ENCODE measurements at regions of chr21 and their contacts with region 1.

Region 1: DNA sequence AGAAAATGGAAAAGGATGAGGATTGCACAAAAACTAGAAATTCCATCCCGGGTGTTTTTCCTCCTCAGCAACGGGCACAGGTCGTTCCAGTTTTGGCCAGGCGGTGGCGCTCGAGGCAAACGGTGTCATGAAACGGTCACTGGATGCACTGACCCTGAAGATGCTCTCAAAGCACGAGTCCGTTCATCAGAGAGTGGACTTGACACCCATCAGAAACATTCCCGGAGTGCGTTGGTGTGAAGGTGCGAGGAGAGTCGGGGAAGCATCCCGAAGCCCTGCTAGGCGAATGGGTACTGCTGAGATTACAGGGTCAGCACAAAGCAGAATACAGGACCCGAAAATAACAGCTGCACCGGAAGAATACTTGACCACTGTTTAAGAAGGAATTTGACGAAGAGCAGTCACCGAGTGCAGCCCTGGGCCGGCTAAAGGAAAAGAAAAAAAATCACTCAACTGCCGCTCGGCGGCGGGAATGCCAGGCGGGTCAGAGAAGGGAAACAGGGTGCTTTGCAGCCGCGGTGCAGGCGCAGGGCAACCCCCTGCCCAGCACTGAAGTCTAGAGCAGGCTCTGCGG is 71.7 kb upstream of the ETS2 start:
- DNase-seq: peak in 33 of 35 experiments; percentile 20 to 76 (median 59)
- ATAC-seq: peak; percentile 55 to 66 (median 62)
- H3K4me3 ChIP-seq: peak overlapping the region; percentile 43 to 87
- H3K4me3 Mint-ChIP-seq: peak overlapping the region; percentile 73 to 86 (median 79)
- H3K27ac ChIP-seq: no peak overlapping the region
- H3K27ac Mint-ChIP-seq: no peak overlapping the region
- H3K4me1 ChIP-seq: peaks cover 6% of the 10 kb centered on the region in 2 experiments
- H3K4me1 Mint-ChIP-seq: peaks cover 7 to 9% (median 9%) of the 10 kb centered on the region in 3 donors
- H3K27me3 ChIP-seq: peaks cover 0 to 24% of the 10 kb centered on the region in 2 experiments
- H3K27me3 Mint-ChIP-seq: peaks cover 24 to 28% of the 10 kb centered on the region in 2 donors

Region 2: GRCh38 chr21:39379986-39380891 is 646.2 kb after region 1 on chr21:
- CTCF ChIA-PET with region 1: interaction called in 1 of 2 experiments, 13 read pairs
- POLR2A ChIA-PET with region 1: no interaction called
- DNase-seq: peak; percentile 62 to 92 (median 82)
- ATAC-seq: peak; percentile 97 to 99 (median 98)
- H3K4me3 ChIP-seq: peak overlapping the region; percentile 68 to 92
- H3K4me3 Mint-ChIP-seq: peak overlapping the region; percentile 91 to 92 (median 92)
- H3K27ac ChIP-seq: peak overlapping the region; percentile 57
- H3K27ac Mint-ChIP-seq: peak overlapping the region; percentile 90 to 91
- H3K4me1 ChIP-seq: peaks cover 6 to 9% of the 10 kb centered on the region in 2 experiments
- H3K4me1 Mint-ChIP-seq: peaks cover 18 to 28% (median 24%) of the 10 kb centered on the region in 3 donors
- H3K27me3 ChIP-seq: peaks cover 0 to 11% of the 10 kb centered on the region in 2 experiments
- H3K27me3 Mint-ChIP-seq: peaks cover 6 to 11% of the 10 kb centered on the region in 2 donors

Measured in T-cell (primary cell).